ENCODE measurements at regions of chr2 and their contacts with region 1.

Region 1: DNA sequence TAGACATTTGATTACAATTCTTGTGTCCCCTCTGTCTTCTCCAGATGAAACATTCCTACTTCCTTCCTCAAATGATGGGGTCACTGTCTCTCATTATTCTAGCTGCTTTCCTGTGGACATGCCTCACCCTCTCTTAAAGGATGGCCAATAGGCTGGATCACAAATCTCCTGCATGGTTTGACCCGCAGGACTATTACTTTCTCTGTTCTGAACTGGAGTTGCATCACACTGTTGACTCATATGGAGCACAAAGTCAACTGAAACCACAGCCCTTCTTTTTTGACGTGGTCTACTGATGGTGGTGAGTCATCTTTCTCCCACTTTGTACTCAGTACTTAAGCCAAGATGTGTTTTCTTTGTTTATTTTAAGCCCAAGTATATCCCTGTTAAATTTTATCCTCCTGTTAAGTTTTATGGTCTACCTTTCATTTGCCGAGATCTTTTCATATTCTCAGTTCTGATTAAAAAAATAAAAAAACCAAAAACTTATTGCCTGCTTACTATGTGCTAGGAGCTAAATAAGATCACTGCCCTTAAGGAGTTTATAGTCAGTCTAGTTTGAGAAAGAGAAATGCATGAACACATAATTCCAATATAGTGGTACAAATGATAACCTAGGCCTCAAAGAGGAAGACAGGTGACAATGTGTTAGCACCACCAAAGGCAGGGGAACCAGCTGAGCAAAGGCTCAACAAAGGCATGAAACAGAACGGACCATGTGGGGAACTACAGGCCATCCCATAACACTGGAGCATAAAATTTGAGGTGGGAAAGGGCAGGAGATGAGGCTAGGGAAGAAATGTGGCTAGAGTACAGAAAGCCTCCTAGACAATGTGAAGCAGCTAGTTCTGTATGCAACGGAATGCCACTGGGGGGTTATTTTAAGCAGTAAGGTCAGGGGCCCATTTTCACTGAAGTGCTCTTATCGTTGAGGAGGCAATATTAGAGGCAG is 67.6 kb upstream of the ZFP36L2 start:
- DNase-seq: peak; percentile 54
- H3K4me3 Mint-ChIP-seq: peak overlapping the region; percentile 34
- H3K27ac Mint-ChIP-seq: peak overlapping the region; percentile 68
- H3K4me1 Mint-ChIP-seq: peaks cover 31% of the 10 kb centered on the region
- H3K27me3 Mint-ChIP-seq: no peaks in the 10 kb centered on the region

Region 2: GRCh38 chr2:43387092-43388062 is 93.4 kb after region 1 on chr2:
- intact Hi-C with region 1: loop called (anchors 5 kb)
- DNase-seq: no peak
- H3K4me3 Mint-ChIP-seq: peak overlapping the region; percentile 31
- H3K27ac Mint-ChIP-seq: peak overlapping the region; percentile 68
- H3K4me1 Mint-ChIP-seq: peaks cover 40% of the 10 kb centered on the region
- H3K27me3 Mint-ChIP-seq: no peaks in the 10 kb centered on the region

Measured in activated T-helper 2 cell treated with anti-CD3 and anti-CD28 coated beads, Interferon-gamma antibody, Interleukin-2, Interleukin-4, amounts not matched to agents 10 μg/mL and 5 μg/mL and 100 μg/mL, durations not matched to agents 14 hours and 24 hours and 36 hours (primary cell).